ENCODE measurements at regions of chr1 and their contacts with region 1.

Region 1: GRCh38 chr1:227697321-227697864 is 37.7 kb downstream of the JMJD4 start:
- DNase-seq: no peak
- H3K4me3 ChIP-seq: no peak overlapping the region
- H3K27ac ChIP-seq: no peak overlapping the region
- H3K4me1 ChIP-seq: no peaks in the 10 kb centered on the region
- CTCF ChIP-seq: no peak

Region 2: DNA sequence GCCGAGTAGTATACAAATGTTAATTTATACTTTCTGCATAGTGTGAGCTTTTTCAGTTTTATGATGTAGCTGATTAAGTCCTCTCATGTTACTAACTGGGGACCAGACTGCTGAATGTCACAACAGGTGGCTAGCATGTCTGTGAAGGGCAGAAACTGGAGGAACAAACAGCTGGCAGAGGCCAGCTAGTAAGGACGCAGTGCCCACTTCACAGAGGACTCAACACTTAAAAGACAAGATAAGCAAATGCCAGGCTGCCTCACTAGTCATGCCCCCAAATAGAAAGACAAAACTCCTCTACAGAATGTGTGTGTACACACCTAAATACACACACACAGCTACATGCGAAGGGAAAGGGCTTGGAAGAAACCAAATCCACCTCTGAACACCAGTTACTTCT is 207.8 kb before region 1 on chr1:
- CTCF ChIA-PET with region 1: no interaction called
- POLR2A ChIA-PET with region 1: no interaction called
- intact Hi-C with region 1: loop called (anchors 10 kb)
- DNase-seq: no peak
- H3K4me3 ChIP-seq: no peak overlapping the region
- H3K27ac ChIP-seq: no peak overlapping the region
- H3K4me1 ChIP-seq: no peaks in the 10 kb centered on the region
- CTCF ChIP-seq: no peak

Region 3: GRCh38 chr1:227855687-227856086 is 158.3 kb after region 1 on chr1:
- CTCF ChIA-PET with region 1: no interaction called
- POLR2A ChIA-PET with region 1: no interaction called
- intact Hi-C with region 1: no loop called
- DNase-seq: no peak
- H3K4me3 ChIP-seq: no peak overlapping the region
- H3K27ac ChIP-seq: no peak overlapping the region
- H3K4me1 ChIP-seq: no peaks in the 10 kb centered on the region
- CTCF ChIP-seq: no peak

Measured in OCI-LY7 (cell line).